Dorsolateral prefrontal cortex (tissue), 120 donors: ENCODE measurements at regions of chrX and their contacts with region 1.

Region 1: DNA sequence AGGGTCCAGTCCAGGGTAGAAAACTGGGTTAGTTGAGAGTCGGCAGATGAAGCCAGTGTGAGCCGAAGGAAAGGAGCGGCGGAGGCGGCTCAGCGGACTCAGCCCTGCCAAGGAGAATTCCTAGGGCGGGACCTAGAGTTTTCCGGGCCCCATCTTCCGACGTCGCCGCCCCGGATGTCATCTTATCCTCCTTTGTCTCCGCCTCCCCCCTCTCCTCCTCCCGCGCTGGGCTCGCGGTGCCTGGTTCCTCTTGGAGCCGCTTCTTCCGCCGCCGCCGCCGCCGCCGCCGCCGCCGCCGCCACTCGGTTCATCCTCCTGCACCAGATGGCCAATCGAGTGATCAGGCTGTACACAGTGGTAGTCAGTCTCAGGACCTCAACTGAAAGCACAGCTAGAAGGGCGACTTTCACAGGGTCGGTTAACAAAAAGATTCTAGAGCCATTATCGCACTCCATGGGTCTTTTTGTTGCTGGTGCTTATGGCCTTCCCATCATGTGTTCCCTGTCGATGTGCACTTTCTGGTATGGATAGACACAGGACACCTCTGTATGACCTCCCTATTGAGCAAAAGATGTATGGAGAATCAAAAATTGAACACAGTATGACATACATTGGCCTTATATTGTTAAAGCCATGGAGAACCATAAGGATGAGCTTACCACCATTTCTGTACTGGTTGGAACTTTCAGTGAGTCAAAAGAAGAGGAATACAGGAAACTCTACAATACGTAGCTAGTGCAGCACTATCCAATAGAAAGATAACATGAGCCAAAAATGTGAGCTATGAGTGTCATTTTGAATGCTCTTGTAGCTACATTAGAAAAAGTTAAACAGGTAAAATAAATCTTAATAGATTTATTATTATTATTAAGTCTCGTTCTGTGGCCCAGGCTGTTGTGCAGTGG is 32.4 kb upstream of the THOC2 start:
- DNase-seq: peak; percentile 63 to 84 (median 79)
- H3K4me3 ChIP-seq: peak overlapping the region; percentile 9 to 66 (median 47)
- H3K27ac ChIP-seq: peak overlapping the region; percentile 18 to 94 (median 86)
- H3K27me3 ChIP-seq: peaks cover 0 to 19% (median 0%) of the 10 kb centered on the region in 45 donors
- CTCF ChIP-seq: peak in 10 of 56 donors; percentile 2 to 30 (median 12)

Region 2: GRCh38 chrX:123570004-123570590 is 195.1 kb before region 1 on chrX:
- intact Hi-C with region 1: no loop called
- DNase-seq: no peak
- H3K4me3 ChIP-seq: no peak overlapping the region
- H3K27ac ChIP-seq: no peak overlapping the region
- H3K27me3 ChIP-seq: peaks cover 0 to 8% (median 0%) of the 10 kb centered on the region in 45 donors
- CTCF ChIP-seq: no peak

Region 3: GRCh38 chrX:123685232-123685631 is 80.0 kb before region 1 on chrX:
- intact Hi-C with region 1: no loop called
- DNase-seq: no peak
- H3K4me3 ChIP-seq: no peak overlapping the region
- H3K27ac ChIP-seq: no peak overlapping the region
- H3K27me3 ChIP-seq: peaks cover 0 to 35% (median 0%) of the 10 kb centered on the region in 45 donors
- CTCF ChIP-seq: no peak

Region 4: GRCh38 chrX:123732670-123733363 is 32.4 kb before region 1 on chrX and contains the start of gene THOC2:
- intact Hi-C with region 1: loop called in 1 of 2 experiments (anchors 5 kb)
- DNase-seq: peak; percentile 68 to 85 (median 79)
- H3K4me3 ChIP-seq: peak within 1 kb of the TSS; percentile 47 to 87 (median 71)
- H3K27ac ChIP-seq: peak within 1 kb of the TSS in 51 of 59 donors; percentile 13 to 84 (median 71)
- H3K27me3 ChIP-seq: peaks cover 0 to 8% (median 0%) of the 10 kb centered on the region in 45 donors
- CTCF ChIP-seq: peak in 48 of 56 donors; percentile 9 to 58 (median 38)
- total RNA-seq, gene THOC2: 45.2 to 86.1 (median 59.5) TPM

Region 5: GRCh38 chrX:123975180-123975579 is 210.0 kb after region 1 on chrX:
- intact Hi-C with region 1: no loop called
- DNase-seq: no peak
- H3K4me3 ChIP-seq: no peak overlapping the region
- H3K27ac ChIP-seq: no peak overlapping the region
- H3K27me3 ChIP-seq: peaks cover 0 to 20% (median 0%) of the 10 kb centered on the region in 45 donors
- CTCF ChIP-seq: no peak